ENCODE measurements at regions of chr3 and their contacts with region 1.

Region 1: DNA sequence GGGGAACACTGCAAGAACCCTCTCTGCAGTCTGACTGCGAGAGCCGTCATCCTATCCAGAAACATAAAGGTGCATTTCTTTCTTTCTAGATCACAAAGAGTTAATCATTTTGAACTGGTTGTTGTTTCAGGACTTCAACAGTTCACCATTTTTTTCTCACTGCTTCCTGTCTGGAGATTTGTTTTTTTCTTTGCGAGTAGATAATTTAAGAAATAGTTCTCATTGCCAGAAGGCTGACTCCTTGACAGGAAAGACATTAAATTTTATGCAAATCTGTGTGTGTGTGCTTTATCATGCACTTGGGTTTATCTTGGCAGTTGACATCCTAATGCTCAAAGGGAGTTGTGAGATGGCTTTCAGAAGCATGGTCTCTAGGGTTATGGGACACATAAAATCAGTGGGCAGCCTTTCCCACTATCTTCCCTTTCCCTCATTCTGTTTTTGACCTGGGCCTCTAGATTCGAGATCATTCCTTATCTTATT is 123.5 kb upstream of the TBL1XR1 start:
- DNase-seq: peak; percentile 23
- ATAC-seq: peak; percentile 78
- H3K4me3 Mint-ChIP-seq: no peak overlapping the region
- H3K27ac Mint-ChIP-seq: peak overlapping the region; percentile 30
- H3K4me1 Mint-ChIP-seq: peaks cover 31% of the 10 kb centered on the region
- H3K27me3 Mint-ChIP-seq: peaks cover 3% of the 10 kb centered on the region

Region 2: DNA sequence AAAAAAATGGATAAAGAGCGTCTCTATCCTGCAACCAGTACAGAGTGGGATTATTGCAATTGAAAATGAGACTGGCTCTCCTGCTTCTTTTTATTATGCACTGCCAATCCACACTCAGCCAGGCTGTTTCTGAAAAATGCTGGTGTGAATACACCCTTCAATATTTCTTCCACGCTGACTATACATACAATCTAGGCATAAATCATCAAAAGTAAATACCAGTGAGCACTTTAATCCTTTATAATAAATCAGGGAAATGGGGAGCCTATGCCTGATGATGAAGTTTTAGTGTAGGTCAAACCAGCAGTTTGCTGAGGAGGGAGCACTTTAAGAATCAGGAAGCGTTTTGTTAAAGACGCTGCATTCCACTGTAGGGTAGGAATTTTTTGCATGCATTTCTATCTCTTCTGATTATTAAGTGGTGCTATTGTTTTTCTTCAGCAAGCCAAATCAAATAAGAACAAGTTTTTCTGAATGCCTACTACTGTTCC is 905.1 kb before region 1 on chr3:
- CTCF ChIA-PET with region 1: no interaction called
- POLR2A ChIA-PET with region 1: no interaction called
- intact Hi-C with region 1: no loop called
- DNase-seq: no peak
- ATAC-seq: no peak
- H3K4me3 Mint-ChIP-seq: no peak overlapping the region
- H3K27ac Mint-ChIP-seq: no peak overlapping the region
- H3K4me1 Mint-ChIP-seq: no peaks in the 10 kb centered on the region
- H3K27me3 Mint-ChIP-seq: no peaks in the 10 kb centered on the region

Region 3: GRCh38 chr3:177337541-177338331 is 16.9 kb after region 1 on chr3:
- CTCF ChIA-PET with region 1: interaction called, 3 read pairs
- POLR2A ChIA-PET with region 1: no interaction called
- intact Hi-C with region 1: loop called (anchors 1 kb)
- DNase-seq: peak; percentile 89
- ATAC-seq: peak; percentile 89
- H3K4me3 Mint-ChIP-seq: peak overlapping the region; percentile 23
- H3K27ac Mint-ChIP-seq: peak overlapping the region; percentile 78
- H3K4me1 Mint-ChIP-seq: peaks cover 41% of the 10 kb centered on the region
- H3K27me3 Mint-ChIP-seq: peaks cover 6% of the 10 kb centered on the region

Measured in activated CD4-positive, alpha-beta T cell treated with anti-CD3 and anti-CD28 coated beads for 36 hours (primary cell).